Mammary epithelial cell (primary cell): ENCODE measurements at regions of chr20 and their contacts with region 1.

Region 1: DNA sequence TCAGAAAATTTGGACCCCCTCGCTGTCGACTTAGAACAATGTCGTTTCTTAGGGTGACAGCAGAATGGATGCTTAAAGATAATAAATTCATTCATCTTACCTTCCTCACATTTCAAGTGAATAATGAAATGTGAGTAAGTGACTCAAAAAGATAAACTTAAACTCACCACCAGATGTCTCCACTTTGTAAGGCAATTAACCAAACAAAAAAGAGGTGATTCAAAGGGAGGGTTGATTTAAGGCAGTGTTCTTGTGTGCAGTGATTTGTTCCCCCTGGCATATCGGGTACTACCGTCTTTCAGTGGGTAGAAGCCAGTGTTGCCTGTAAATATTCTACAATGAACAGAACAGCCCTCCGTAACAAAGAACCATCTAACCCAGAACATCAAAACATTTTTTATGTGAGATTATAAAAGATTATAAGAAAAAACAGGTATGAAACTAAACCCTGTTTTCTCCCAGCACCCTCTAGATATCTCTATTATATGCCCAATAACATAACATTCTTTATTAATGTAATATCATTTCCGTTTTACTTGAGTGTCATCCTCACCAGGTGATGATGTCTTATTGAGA is 589.7 kb downstream of the CBLN4 start:
- DNase-seq: peak; percentile 45
- H3K4me3 ChIP-seq: no peak overlapping the region
- H3K27ac ChIP-seq: no peak overlapping the region
- H3K4me1 ChIP-seq: no peaks in the 10 kb centered on the region
- H3K27me3 ChIP-seq: no peaks in the 10 kb centered on the region
- CTCF ChIP-seq: peak; percentile 35 to 61

Region 2: DNA sequence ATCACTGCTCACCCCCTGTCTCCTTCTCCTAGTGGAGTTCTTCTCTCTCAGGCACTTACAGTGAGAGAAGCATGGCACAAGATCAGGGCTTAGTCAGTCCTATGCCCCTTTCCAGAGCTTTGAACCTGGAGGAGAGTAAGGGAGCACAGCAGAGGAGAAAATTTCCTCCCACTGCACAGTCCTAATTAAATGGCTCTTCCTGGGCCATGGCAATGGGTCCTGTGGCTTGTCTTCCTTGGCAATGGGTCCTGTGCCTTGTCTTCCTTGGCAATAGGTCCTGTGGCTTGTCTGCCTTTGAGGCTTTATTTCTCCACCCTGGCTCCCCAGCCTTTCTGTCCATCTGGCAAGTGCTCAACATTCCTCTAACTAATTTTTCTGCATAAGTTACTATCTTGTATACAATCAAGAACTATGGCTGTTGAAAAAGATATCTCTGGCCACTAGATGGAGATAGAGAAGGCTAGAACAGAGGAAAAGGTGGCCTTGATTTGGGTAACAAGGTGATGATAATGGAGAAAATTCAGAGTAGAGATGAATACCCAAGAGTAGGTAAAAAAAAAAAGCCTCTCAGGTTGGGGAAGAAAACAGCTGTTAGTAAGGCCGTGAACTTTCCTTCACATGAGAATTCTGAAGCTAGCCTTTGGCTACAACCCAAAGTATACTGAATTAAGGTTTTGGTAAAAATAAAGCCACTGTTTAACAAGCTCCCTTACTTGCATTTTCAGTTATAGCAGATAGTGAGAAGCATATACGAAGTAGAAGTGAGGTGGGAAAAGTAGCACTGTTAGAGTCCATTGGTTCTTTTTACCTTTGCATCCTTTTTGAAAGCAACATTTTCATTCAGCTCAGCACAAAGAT is 435.3 kb before region 1 on chr20:
- CTCF ChIA-PET with region 1: no interaction called
- dilution Hi-C with region 1: no loop called
- in situ Hi-C with region 1: no loop called
- intact Hi-C with region 1: loop called (anchors 1 kb)
- DNase-seq: peak; percentile 15
- H3K4me3 ChIP-seq: no peak overlapping the region
- H3K27ac ChIP-seq: no peak overlapping the region
- H3K4me1 ChIP-seq: no peaks in the 10 kb centered on the region
- H3K27me3 ChIP-seq: no peaks in the 10 kb centered on the region
- CTCF ChIP-seq: peak; percentile 47 to 56

Region 3: DNA sequence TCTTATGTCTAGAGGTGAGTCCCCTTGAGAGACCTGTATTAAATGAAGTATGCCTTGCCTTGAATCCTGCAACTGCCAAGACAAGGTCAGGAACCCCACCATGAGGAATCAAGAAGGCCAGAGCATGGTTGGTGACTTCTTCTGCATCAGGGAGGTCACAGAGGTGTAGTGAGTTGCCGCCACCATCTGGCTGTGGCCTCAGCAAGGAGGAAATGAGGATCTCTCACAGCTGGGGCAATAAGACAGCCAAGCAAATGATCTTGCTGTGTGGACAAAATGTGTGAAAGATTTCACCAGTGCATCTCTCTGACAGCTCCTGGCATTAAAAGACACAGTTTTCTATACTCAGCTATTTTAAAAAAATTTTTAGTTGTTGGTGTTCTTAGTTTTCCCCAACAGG is 329.2 kb before region 1 on chr20:
- CTCF ChIA-PET with region 1: no interaction called
- dilution Hi-C with region 1: no loop called
- in situ Hi-C with region 1: no loop called
- intact Hi-C with region 1: no loop called
- DNase-seq: no peak
- H3K4me3 ChIP-seq: no peak overlapping the region
- H3K27ac ChIP-seq: no peak overlapping the region
- H3K4me1 ChIP-seq: no peaks in the 10 kb centered on the region
- H3K27me3 ChIP-seq: no peaks in the 10 kb centered on the region
- CTCF ChIP-seq: no peak

Region 4: DNA sequence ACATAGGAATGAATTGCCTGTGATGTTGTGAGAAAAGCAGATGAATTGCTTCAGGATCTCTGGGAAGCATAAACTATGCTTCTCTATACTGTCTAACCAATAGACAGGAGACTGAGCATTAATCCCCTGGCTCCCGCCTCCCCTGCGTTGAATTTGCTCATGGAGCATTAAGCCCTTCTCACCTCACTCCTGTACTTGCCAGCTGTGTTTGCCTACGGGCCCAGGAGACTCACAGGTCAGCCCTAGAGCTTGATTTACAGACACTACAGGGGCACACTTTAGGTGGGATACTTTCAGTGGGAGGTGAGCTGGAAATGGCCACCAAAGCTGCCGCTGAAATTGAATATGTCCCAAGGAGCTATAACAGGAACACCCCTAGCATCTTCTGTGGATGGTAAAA is 171.0 kb after region 1 on chr20:
- CTCF ChIA-PET with region 1: no interaction called
- dilution Hi-C with region 1: no loop called
- in situ Hi-C with region 1: no loop called
- intact Hi-C with region 1: loop called (anchors 5 kb)
- DNase-seq: no peak
- H3K4me3 ChIP-seq: no peak overlapping the region
- H3K27ac ChIP-seq: no peak overlapping the region
- H3K4me1 ChIP-seq: peaks cover 8% of the 10 kb centered on the region
- H3K27me3 ChIP-seq: no peaks in the 10 kb centered on the region
- CTCF ChIP-seq: no peak

Region 5: GRCh38 chr20:55642120-55642519 is 226.5 kb after region 1 on chr20:
- CTCF ChIA-PET with region 1: no interaction called
- dilution Hi-C with region 1: no loop called
- in situ Hi-C with region 1: no loop called
- intact Hi-C with region 1: loop called (anchors 1 kb)
- DNase-seq: no peak
- H3K4me3 ChIP-seq: no peak overlapping the region
- H3K27ac ChIP-seq: no peak overlapping the region
- H3K4me1 ChIP-seq: no peaks in the 10 kb centered on the region
- H3K27me3 ChIP-seq: no peaks in the 10 kb centered on the region
- CTCF ChIP-seq: peak in 1 of 2 donors; percentile 28

Region 6: DNA sequence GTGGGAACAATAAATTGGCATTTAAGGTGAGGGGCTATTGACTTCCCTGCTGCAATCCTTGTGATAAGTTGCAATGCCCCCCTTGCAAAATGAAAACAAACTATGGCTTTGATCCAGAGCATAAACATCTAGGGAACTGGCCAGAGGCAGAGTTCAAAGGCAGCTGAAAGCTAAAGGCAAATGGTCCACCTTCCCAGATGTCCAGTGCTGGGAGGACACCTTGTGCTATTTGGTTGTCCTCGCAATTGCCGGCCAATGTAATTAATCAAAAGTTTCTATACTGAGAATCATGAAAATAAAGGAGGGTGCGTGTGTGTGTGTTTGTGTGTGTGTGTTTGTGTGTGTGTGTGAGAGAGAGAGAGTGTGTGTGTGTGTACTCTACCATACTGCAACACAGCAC is 252.3 kb after region 1 on chr20:
- CTCF ChIA-PET with region 1: interaction called, 3 read pairs
- dilution Hi-C with region 1: no loop called
- in situ Hi-C with region 1: no loop called
- intact Hi-C with region 1: loop called (anchors 5 kb)
- DNase-seq: no peak
- H3K4me3 ChIP-seq: no peak overlapping the region
- H3K27ac ChIP-seq: no peak overlapping the region
- H3K4me1 ChIP-seq: no peaks in the 10 kb centered on the region
- H3K27me3 ChIP-seq: no peaks in the 10 kb centered on the region
- CTCF ChIP-seq: peak in 1 of 2 donors; percentile 11

Region 7: GRCh38 chr20:55961376-55962330 is 546.0 kb after region 1 on chr20:
- CTCF ChIA-PET with region 1: no interaction called
- dilution Hi-C with region 1: no loop called
- in situ Hi-C with region 1: no loop called
- intact Hi-C with region 1: loop called (anchors 10 kb)
- DNase-seq: no peak
- H3K4me3 ChIP-seq: no peak overlapping the region
- H3K27ac ChIP-seq: no peak overlapping the region
- H3K4me1 ChIP-seq: no peaks in the 10 kb centered on the region
- H3K27me3 ChIP-seq: no peaks in the 10 kb centered on the region
- CTCF ChIP-seq: no peak

Region 8: GRCh38 chr20:56171087-56172012 is 755.7 kb after region 1 on chr20:
- CTCF ChIA-PET with region 1: no interaction called
- dilution Hi-C with region 1: no loop called
- in situ Hi-C with region 1: loop called in 1 of 2 experiments (anchors 25 kb)
- intact Hi-C with region 1: loop called (anchors 2 kb)
- DNase-seq: peak; percentile 9
- H3K4me3 ChIP-seq: no peak overlapping the region
- H3K27ac ChIP-seq: no peak overlapping the region
- H3K4me1 ChIP-seq: no peaks in the 10 kb centered on the region
- H3K27me3 ChIP-seq: no peaks in the 10 kb centered on the region
- CTCF ChIP-seq: peak; percentile 48 to 75